Naive thymus-derived CD4-positive, alpha-beta T cell (primary cell): ENCODE measurements at regions of chr12 and their contacts with region 1.

Region 1: GRCh38 chr12:127165567-127166392 is 1101.2 kb upstream of the TMEM132C start:
- DNase-seq: peak; percentile 73 to 90 (median 80)
- ATAC-seq: peak; percentile 91
- H3K4me3 ChIP-seq: peak overlapping the region; percentile 57
- H3K4me3 Mint-ChIP-seq: peak overlapping the region; percentile 50 to 92 (median 85)
- H3K27ac ChIP-seq: peak overlapping the region; percentile 85
- H3K27ac Mint-ChIP-seq: peak overlapping the region; percentile 58 to 94 (median 77)
- H3K4me1 ChIP-seq: peaks cover 13 to 15% of the 10 kb centered on the region in 2 donors
- H3K4me1 Mint-ChIP-seq: peaks cover 9 to 29% (median 25%) of the 10 kb centered on the region in 7 donors
- H3K27me3 ChIP-seq: no peaks in the 10 kb centered on the region
- H3K27me3 Mint-ChIP-seq: peaks cover 14 to 23% (median 19%) of the 10 kb centered on the region in 5 donors

Region 2: DNA sequence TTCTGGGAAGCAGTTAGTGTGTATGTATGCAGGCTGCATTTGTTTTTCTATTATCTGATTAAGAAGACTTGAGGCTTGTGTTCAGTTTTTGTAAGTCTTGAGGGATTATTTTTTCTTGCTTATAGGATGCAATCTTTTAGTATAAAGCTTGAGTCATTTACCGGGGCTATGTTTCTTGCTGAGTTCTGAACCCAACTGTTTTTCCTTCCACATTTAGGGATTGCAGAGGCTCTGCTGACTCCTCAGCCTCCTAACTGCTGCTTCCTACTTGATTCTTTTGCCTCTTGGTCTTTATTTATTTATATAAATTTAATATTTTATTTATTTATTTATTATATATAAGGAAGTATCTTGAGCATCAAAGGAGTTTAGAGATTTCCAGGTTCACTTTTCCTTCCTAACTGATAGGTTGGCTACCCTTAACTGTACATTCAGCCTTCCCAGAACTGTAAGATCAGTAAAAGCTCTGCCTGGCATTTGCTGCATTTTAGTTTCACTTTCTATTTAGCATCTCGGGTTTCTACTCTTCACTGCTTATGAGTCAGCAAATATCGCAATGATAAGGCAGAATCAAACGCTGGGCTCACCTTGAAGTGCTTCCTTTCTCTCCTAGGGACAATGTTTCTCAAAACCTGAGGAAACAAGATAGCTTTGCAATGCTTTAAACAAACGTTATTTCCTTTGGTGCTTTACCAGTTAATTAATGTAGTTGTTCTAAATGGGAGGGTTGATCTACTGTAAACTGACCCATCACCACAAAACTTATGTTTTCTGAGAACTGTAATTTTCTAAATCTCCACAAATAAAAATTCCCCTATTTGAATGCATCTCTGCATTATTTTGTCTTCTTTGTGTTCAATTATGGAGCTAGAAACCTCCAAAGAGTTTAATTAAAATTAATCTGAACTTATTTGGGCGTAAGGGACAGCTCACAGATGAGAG is 82.5 kb before region 1 on chr12:
- CTCF ChIA-PET with region 1: no interaction called
- POLR2A ChIA-PET with region 1: no interaction called
- intact Hi-C with region 1: loop called (anchors 2 to 5 kb)
- DNase-seq: peak in 7 of 9 donors; percentile 11 to 50 (median 34)
- ATAC-seq: peak; percentile 49
- H3K4me3 ChIP-seq: peak overlapping the region; percentile 49
- H3K4me3 Mint-ChIP-seq: peak overlapping the region; percentile 72 to 95 (median 82)
- H3K27ac ChIP-seq: no peak overlapping the region
- H3K27ac Mint-ChIP-seq: peak overlapping the region; percentile 48 to 89 (median 65)
- H3K4me1 ChIP-seq: no peaks in the 10 kb centered on the region
- H3K4me1 Mint-ChIP-seq: peaks cover 5 to 19% (median 14%) of the 10 kb centered on the region in 7 donors
- H3K27me3 ChIP-seq: no peaks in the 10 kb centered on the region
- H3K27me3 Mint-ChIP-seq: peaks cover 0 to 7% (median 0%) of the 10 kb centered on the region in 5 donors

Region 3: DNA sequence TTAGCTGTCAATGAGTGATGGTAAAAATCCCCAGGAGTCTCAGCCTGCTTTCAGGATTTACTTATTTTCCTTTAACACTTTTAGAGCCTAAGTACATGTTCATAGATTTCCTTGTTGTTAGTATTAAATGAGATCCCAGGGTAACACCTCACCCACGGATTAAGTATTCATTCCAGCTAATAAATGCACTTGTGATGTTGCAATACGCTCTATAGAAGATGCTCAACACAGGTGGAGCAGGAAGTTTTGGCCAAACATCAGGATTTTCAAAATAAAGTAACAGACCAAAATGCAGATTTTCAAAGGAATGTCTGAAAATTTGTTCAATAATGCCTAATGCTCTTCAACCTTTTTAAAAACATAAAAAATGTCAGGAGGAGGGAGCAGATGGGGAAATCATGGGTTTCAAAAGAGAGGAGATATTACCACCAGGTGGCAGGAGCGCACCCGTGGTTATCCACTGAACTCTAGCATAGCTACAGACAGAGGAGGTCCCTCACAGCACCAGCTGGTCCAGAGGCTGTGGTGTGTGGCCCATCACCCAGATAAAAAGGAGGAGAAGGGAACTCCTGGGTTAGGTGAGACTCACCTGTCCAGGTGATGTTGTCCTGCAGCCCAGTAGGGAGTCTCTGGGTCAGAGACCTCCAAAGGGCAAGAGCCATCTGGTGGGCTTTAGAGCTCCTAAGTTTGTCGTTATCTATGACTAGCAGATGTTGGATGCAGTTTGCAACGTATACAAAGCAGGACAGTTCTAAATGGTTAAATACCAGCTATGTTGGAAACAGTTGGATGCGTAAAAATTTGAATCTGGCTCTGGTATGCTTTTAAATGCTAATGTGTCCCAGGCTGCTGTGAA is 57.2 kb before region 1 on chr12:
- CTCF ChIA-PET with region 1: no interaction called
- POLR2A ChIA-PET with region 1: no interaction called
- intact Hi-C with region 1: loop called in 1 of 2 experiments (anchors 1 kb)
- DNase-seq: peak in 6 of 9 donors; percentile 7 to 35 (median 32)
- ATAC-seq: peak; percentile 45
- H3K4me3 ChIP-seq: no peak overlapping the region
- H3K4me3 Mint-ChIP-seq: no peak overlapping the region
- H3K27ac ChIP-seq: no peak overlapping the region
- H3K27ac Mint-ChIP-seq: peak overlapping the region in 1 of 9 donors; percentile 12
- H3K4me1 ChIP-seq: no peaks in the 10 kb centered on the region
- H3K4me1 Mint-ChIP-seq: no peaks in the 10 kb centered on the region
- H3K27me3 ChIP-seq: no peaks in the 10 kb centered on the region
- H3K27me3 Mint-ChIP-seq: peaks cover 5 to 56% (median 30%) of the 10 kb centered on the region in 5 donors

Region 4: GRCh38 chr12:127145929-127146789 is 19.6 kb before region 1 on chr12:
- CTCF ChIA-PET with region 1: no interaction called
- POLR2A ChIA-PET with region 1: interaction called, 4 read pairs
- intact Hi-C with region 1: loop called in 1 of 2 experiments (anchors 1 kb)
- DNase-seq: peak; percentile 10 to 76 (median 67)
- ATAC-seq: peak; percentile 89
- H3K4me3 ChIP-seq: peak overlapping the region; percentile 63
- H3K4me3 Mint-ChIP-seq: peak overlapping the region; percentile 51 to 86 (median 83)
- H3K27ac ChIP-seq: peak overlapping the region; percentile 56
- H3K27ac Mint-ChIP-seq: peak overlapping the region in 7 of 9 donors; percentile 42 to 87 (median 62)
- H3K4me1 ChIP-seq: no peaks in the 10 kb centered on the region
- H3K4me1 Mint-ChIP-seq: peaks cover 0 to 16% (median 9%) of the 10 kb centered on the region in 7 donors
- H3K27me3 ChIP-seq: no peaks in the 10 kb centered on the region
- H3K27me3 Mint-ChIP-seq: peaks cover 0 to 14% (median 10%) of the 10 kb centered on the region in 5 donors

Region 5: DNA sequence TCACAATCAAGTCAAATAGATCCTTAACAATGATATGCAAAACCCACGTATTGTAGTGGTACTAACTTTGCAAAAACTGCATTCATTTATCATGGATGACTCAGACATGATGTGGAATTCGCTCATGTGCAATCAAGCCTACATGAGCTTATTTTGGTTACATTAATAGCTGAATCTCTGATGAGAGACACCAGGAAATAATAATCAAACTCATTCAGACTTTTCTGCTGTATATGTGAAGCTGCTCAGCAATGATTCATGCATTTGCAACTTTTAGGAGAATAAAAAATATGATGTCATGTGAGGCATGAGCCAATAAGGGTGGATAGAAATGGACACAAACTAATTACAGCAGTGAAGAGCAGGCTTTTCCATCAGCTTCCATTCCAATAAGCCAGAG is 25.3 kb after region 1 on chr12:
- CTCF ChIA-PET with region 1: no interaction called
- POLR2A ChIA-PET with region 1: no interaction called
- intact Hi-C with region 1: no loop called
- DNase-seq: no peak
- ATAC-seq: no peak
- H3K4me3 ChIP-seq: no peak overlapping the region
- H3K4me3 Mint-ChIP-seq: no peak overlapping the region
- H3K27ac ChIP-seq: no peak overlapping the region
- H3K27ac Mint-ChIP-seq: no peak overlapping the region
- H3K4me1 ChIP-seq: no peaks in the 10 kb centered on the region
- H3K4me1 Mint-ChIP-seq: peaks cover 0 to 1% (median 0%) of the 10 kb centered on the region in 7 donors
- H3K27me3 ChIP-seq: no peaks in the 10 kb centered on the region
- H3K27me3 Mint-ChIP-seq: peaks cover 0 to 30% (median 10%) of the 10 kb centered on the region in 5 donors

Region 6: GRCh38 chr12:127280393-127281275 is 114.9 kb after region 1 on chr12:
- CTCF ChIA-PET with region 1: no interaction called
- POLR2A ChIA-PET with region 1: no interaction called
- intact Hi-C with region 1: loop called in 1 of 2 experiments (anchors 1 kb)
- DNase-seq: peak in 8 of 9 donors; percentile 9 to 84 (median 34)
- ATAC-seq: peak; percentile 81
- H3K4me3 ChIP-seq: no peak overlapping the region
- H3K4me3 Mint-ChIP-seq: no peak overlapping the region
- H3K27ac ChIP-seq: no peak overlapping the region
- H3K27ac Mint-ChIP-seq: no peak overlapping the region
- H3K4me1 ChIP-seq: no peaks in the 10 kb centered on the region
- H3K4me1 Mint-ChIP-seq: peaks cover 0 to 9% (median 0%) of the 10 kb centered on the region in 7 donors
- H3K27me3 ChIP-seq: no peaks in the 10 kb centered on the region
- H3K27me3 Mint-ChIP-seq: peaks cover 0 to 19% (median 15%) of the 10 kb centered on the region in 5 donors

Region 7: GRCh38 chr12:127559349-127560040 is 393.7 kb after region 1 on chr12:
- CTCF ChIA-PET with region 1: no interaction called
- POLR2A ChIA-PET with region 1: no interaction called
- intact Hi-C with region 1: loop called in 1 of 2 experiments (anchors 5 kb)
- DNase-seq: peak in 1 of 9 donors; percentile 80
- ATAC-seq: peak; percentile 73
- H3K4me3 ChIP-seq: no peak overlapping the region
- H3K4me3 Mint-ChIP-seq: peak overlapping the region in 1 of 10 donors; percentile 86
- H3K27ac ChIP-seq: no peak overlapping the region
- H3K27ac Mint-ChIP-seq: peak overlapping the region in 1 of 9 donors; percentile 99
- H3K4me1 ChIP-seq: no peaks in the 10 kb centered on the region
- H3K4me1 Mint-ChIP-seq: peaks cover 0 to 66% (median 0%) of the 10 kb centered on the region in 7 donors
- H3K27me3 ChIP-seq: no peaks in the 10 kb centered on the region
- H3K27me3 Mint-ChIP-seq: peaks cover 0 to 11% (median 0%) of the 10 kb centered on the region in 5 donors

Region 8: GRCh38 chr12:128823916-128824839 is 1658.4 kb after region 1 on chr12 and contains the start of gene SLC15A4:
- CTCF ChIA-PET with region 1: no interaction called
- POLR2A ChIA-PET with region 1: no interaction called
- intact Hi-C with region 1: loop called in 1 of 2 experiments (anchors 5 kb)
- DNase-seq: peak; percentile 73 to 97 (median 82)
- ATAC-seq: peak; percentile 92
- H3K4me3 ChIP-seq: peak within 1 kb of the TSS; percentile 85
- H3K4me3 Mint-ChIP-seq: peak within 1 kb of the TSS; percentile 76 to 90 (median 83)
- H3K27ac ChIP-seq: peak within 1 kb of the TSS; percentile 60
- H3K27ac Mint-ChIP-seq: peak within 1 kb of the TSS in 8 of 9 donors; percentile 21 to 83 (median 35)
- H3K4me1 ChIP-seq: peaks cover 21 to 22% of the 10 kb centered on the region in 2 donors
- H3K4me1 Mint-ChIP-seq: peaks cover 21 to 39% (median 31%) of the 10 kb centered on the region in 7 donors
- H3K27me3 ChIP-seq: no peaks in the 10 kb centered on the region
- H3K27me3 Mint-ChIP-seq: peaks cover 0 to 7% (median 4%) of the 10 kb centered on the region in 5 donors
- total RNA-seq, gene SLC15A4: 9.5 to 44.5 (median 17.6) TPM